ENCODE measurements at regions of chr3 and their contacts with region 1.

Region 1: DNA sequence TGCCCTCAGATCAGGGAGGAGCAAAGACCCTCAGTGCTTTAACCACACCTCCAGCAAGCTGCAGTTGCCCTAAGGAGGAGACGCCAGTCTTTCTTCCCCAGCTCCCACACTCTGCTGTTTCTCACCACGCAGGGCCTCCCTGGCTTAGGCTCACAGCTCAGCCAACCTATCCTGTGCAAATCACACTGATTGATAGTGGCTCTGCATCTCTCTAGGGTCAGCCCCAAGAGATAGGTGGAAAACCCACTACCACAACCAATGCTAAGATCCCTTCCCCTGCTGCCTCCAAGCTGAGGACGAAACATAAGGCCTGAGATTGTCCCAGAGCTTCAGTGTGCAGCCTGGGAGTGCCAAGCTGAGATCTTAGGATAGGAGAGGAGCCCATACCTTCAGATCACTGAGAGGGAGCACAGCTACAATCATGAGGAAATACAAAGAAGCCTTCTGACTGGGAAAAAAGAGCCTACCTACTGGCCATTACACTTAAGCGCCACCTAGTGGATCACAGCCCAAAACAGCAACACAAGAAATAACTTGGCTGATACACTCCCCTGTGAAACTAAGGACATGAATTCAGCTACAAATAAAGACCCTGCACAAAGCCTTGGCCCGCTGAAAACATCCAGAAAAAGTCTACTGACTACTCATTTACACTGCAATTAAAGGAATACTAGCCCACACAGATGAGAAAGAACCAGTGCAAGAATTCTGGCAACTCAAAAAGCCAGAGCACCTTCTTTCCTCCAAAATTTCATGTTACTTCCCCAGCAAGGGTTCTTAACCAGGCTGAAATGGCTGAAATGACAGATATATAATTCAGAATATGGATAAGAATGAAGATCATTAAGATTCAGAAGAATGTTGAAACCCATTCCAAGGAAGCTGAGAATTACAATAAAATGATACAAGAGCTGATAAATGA is 271.5 kb upstream of the DCBLD2 start:
- DNase-seq: peak; percentile 32
- CTCF ChIP-seq: peak; percentile 63

Region 2: GRCh38 chr3:99114565-99115291 is 58.3 kb before region 1 on chr3:
- CTCF ChIA-PET with region 1: interaction called, 13 read pairs
- POLR2A ChIA-PET with region 1: no interaction called
- DNase-seq: no peak
- CTCF ChIP-seq: peak; percentile 65

Region 3: GRCh38 chr3:99186016-99186415 is 13.0 kb after region 1 on chr3:
- CTCF ChIA-PET with region 1: interaction called, 56 read pairs
- POLR2A ChIA-PET with region 1: no interaction called
- DNase-seq: no peak
- CTCF ChIP-seq: no peak

Region 4: DNA sequence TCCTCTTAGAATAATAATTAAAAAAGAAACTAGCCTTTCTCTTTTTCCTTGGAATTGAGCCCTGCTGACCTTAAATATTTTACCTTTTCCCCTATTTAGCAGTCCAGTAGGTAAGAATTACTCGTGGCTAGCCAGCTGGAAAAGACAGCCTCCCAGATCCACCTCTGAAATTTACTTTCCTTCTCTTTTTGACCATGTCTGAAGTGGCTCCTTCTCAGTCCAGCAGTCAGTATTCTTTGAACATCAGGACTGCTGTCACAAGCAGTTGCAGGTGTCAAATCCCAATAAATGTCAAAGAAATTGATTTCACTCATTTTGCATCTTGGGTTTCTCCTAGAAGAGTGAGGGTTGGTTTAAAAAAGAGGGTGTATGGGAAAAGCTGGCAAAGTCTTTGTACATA is 40.0 kb after region 1 on chr3:
- CTCF ChIA-PET with region 1: interaction called, 11 read pairs
- POLR2A ChIA-PET with region 1: no interaction called
- DNase-seq: no peak
- CTCF ChIP-seq: no peak

Region 5: DNA sequence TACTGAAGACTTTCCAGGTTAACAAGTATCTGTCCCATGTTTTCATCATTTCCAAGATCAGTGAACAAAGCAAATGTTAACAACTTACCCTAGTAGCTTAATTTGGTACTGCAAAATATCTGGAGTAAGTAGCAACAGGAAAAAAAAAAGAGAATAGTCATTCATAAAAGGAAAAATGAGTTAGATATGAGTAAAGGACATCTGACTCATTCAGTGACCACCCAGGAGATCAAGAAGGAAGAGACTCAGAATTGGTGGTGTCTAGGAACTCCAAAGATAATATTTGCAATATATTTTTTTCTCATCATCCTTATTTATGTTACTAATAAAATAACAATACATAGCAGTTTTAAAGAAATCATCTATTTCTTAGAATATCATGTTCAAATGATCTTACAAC is 211.6 kb after region 1 on chr3:
- CTCF ChIA-PET with region 1: no interaction called
- POLR2A ChIA-PET with region 1: no interaction called
- DNase-seq: no peak
- CTCF ChIP-seq: no peak

Measured in GM10248 (cell line).